Adrenal gland (tissue), 19 donors: ENCODE measurements at regions of chr4 and their contacts with region 1.

Region 1: DNA sequence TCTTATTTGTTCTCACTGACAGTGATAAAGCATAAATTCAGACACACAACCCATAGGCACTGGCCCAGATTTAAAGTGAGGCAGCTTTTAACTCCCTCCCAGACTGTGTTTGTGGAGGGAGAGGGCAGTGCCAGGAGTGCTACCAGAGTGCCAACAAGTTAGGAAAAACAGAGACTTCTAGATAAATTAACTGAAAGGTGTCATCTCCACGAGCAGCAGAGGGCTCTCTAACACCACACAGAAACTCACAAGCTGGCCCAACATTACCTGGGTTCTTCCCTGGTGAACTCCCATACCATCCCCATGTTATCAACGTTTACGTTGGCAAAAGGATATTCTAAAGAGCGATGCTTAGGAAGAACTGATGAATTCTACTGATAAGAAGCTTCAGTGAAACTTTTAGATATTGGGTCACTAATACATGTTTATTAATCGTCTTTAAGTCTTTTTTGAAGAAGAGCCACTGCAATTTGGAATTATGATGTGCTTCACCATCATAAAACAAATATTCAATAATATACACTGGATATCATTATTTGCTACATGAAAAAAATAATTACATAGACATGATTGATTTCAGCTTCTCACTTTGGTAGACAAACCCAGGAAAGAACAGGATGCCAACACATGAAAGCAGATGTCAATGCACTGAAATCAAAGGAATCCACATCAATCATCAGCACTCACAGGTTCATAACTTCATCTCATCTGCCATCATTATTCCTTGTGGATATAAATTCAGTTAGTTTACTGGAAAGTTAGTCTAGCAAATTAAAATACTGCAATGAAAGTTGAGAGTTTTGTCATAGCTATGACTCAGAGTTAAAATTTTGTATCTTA is 121.2 kb upstream of the NAP1L5 start:
- DNase-seq: peak in 6 of 7 donors; percentile 31 to 77 (median 46)
- H3K4me3 ChIP-seq: no peak overlapping the region
- H3K27ac ChIP-seq: no peak overlapping the region
- H3K4me1 ChIP-seq: peaks cover 9 to 66% of the 10 kb centered on the region in 2 donors
- H3K27me3 ChIP-seq: no peaks in the 10 kb centered on the region
- CTCF ChIP-seq: peak; percentile 32 to 73 (median 61)
- POLR2A ChIP-seq: no peak

Region 2: DNA sequence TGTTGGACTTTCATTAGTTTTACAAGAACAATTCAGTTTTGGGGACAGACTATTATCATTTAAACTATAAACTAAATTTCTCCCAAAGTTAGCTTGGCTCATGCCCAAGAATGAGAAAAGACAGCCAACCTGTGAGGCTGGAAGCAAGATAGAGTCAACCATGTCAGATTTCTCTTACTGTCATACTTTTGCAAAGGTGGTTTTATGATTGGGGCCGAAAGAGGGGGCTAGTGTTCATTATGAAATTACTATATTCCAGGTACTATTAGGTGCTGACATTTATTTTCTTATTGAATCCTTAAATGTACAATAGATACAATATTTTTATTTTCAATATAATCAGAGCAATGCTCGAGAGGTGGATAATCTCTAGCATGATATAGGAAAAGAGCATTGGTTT is 409.6 kb before region 1 on chr4:
- intact Hi-C with region 1: no loop called
- DNase-seq: no peak
- H3K4me3 ChIP-seq: no peak overlapping the region
- H3K27ac ChIP-seq: no peak overlapping the region
- H3K4me1 ChIP-seq: no peaks in the 10 kb centered on the region
- H3K27me3 ChIP-seq: no peaks in the 10 kb centered on the region
- CTCF ChIP-seq: no peak
- POLR2A ChIP-seq: no peak

Region 3: GRCh38 chr4:88706574-88706973 is 112.3 kb before region 1 on chr4:
- intact Hi-C with region 1: loop called in 1 of 2 experiments (anchors 10 kb)
- DNase-seq: peak; percentile 39 to 74 (median 49)
- H3K4me3 ChIP-seq: no peak overlapping the region
- H3K27ac ChIP-seq: peak overlapping the region in 1 of 5 donors; percentile 45
- H3K4me1 ChIP-seq: peaks cover 0 to 9% of the 10 kb centered on the region in 2 donors
- H3K27me3 ChIP-seq: no peaks in the 10 kb centered on the region
- CTCF ChIP-seq: peak; percentile 53 to 81 (median 70)
- POLR2A ChIP-seq: no peak

Region 4: GRCh38 chr4:88728146-88728545 is 90.7 kb before region 1 on chr4:
- intact Hi-C with region 1: no loop called
- DNase-seq: no peak
- H3K4me3 ChIP-seq: no peak overlapping the region
- H3K27ac ChIP-seq: no peak overlapping the region
- H3K4me1 ChIP-seq: no peaks in the 10 kb centered on the region
- H3K27me3 ChIP-seq: no peaks in the 10 kb centered on the region
- CTCF ChIP-seq: no peak
- POLR2A ChIP-seq: no peak

Region 5: DNA sequence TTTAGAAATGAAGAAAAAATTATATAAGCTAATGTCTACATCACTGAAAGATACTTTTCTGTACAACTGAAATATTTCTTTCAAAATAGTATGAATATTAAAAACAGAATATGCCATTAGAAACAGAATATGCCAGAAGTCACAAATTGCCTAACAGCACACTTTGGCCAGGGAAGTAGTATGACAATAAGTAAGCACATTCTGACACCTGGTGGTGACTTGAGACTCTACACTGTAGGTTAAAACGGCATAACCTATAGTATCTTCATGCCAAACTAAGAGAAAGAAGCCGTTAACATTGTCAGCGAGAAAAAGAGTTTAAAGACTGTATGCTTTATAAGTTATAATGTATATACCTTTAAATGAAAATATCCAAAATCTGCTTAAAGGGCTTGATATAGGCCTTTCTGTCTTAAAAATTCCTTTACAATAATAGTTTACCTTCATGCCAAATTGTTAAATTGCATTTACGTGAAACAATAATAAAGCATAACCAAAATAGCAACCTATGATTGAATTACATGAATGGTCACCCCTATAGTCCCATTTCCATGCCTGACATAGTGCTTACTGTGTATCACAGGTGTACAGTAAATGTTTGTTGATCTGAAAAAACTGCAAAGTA is 205.3 kb after region 1 on chr4:
- intact Hi-C with region 1: loop called (anchors 5 kb)
- DNase-seq: peak; percentile 45 to 83 (median 65)
- H3K4me3 ChIP-seq: no peak overlapping the region
- H3K27ac ChIP-seq: no peak overlapping the region
- H3K4me1 ChIP-seq: peaks cover 0 to 20% of the 10 kb centered on the region in 2 donors
- H3K27me3 ChIP-seq: no peaks in the 10 kb centered on the region
- CTCF ChIP-seq: peak; percentile 68 to 95 (median 92)
- POLR2A ChIP-seq: no peak

Region 6: DNA sequence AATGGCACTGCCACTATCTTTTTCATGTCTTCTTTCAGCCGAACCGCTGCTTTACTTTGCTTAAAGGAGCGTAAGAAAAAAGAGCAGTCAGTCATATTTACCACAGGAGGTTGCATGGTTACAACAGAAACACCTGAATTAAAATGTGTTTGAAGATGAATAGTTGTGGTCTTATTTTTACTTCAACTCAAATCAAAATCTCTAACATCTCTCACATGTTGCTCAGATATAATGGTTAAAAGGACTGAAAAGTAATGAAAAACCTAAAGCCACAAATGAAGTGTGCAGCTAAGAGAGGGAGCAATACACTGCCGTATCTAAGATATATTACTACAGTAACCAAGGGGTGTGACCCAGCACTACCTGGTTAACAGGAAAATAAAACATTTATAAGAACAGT is 210.7 kb after region 1 on chr4:
- intact Hi-C with region 1: loop called (anchors 5 kb)
- DNase-seq: no peak
- H3K4me3 ChIP-seq: no peak overlapping the region
- H3K27ac ChIP-seq: no peak overlapping the region
- H3K4me1 ChIP-seq: peaks cover 0 to under 1% of the 10 kb centered on the region in 2 donors
- H3K27me3 ChIP-seq: no peaks in the 10 kb centered on the region
- CTCF ChIP-seq: no peak
- POLR2A ChIP-seq: no peak